ENCODE measurements at regions of chr14 and their contacts with region 1.

Region 1: DNA sequence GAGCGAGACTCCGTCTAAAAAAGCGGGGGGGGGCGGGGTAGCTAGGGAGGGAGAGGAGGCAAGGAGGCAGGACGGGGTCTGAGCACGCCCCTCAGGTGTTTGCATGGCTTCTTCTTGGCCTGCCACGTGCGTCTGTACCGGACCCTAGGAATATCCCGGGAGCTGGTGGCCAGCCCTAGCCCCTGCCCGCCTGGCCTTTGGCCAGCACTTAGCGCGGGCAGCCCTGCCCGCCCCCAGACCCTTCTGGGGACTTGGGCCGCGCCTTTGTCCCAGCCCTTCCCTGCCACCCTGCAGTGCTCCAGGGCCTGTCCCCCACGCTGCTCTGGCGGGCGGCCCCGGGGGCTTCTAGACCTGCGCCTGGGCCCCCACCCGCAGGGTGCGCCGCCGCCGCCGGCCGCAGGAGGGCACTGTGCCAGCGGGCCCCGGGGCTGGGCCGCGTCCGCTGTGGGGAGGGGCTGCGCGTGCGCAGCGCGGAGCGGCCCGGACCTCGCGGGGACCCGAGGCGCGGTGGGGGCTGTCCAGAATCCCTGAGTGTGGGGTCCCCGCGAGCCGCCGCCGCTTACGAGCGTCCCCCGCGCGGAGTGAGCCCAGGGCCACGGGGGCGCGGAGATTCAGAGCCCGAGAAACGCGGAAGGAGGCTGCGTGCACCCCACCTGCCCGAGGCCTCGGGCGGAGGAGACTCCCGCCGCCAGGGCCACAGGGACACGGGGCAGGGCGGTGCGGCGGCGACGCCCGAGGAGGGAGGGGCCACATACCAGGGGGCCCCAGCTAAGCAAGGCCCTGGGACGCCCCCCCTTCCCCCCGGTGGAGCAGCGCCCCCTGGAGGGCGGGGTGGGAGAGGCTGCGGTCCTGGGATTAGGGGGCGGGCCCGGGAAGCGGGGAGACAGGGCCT is 21.0 kb downstream of the SLC25A29 start:
- DNase-seq: peak; percentile 76
- H3K4me3 Mint-ChIP-seq: peak overlapping the region; percentile 72
- H3K27ac Mint-ChIP-seq: peak overlapping the region; percentile 83
- H3K4me1 Mint-ChIP-seq: peaks cover 13% of the 10 kb centered on the region
- H3K27me3 Mint-ChIP-seq: no peaks in the 10 kb centered on the region

Region 2: GRCh38 chr14:100297302-100298300 is 12.3 kb after region 1 on chr14:
- CTCF ChIA-PET with region 1: interaction called, 64 read pairs
- POLR2A ChIA-PET with region 1: no interaction called
- DNase-seq: no peak
- H3K4me3 Mint-ChIP-seq: no peak overlapping the region
- H3K27ac Mint-ChIP-seq: no peak overlapping the region
- H3K4me1 Mint-ChIP-seq: no peaks in the 10 kb centered on the region
- H3K27me3 Mint-ChIP-seq: no peaks in the 10 kb centered on the region

Region 3: DNA sequence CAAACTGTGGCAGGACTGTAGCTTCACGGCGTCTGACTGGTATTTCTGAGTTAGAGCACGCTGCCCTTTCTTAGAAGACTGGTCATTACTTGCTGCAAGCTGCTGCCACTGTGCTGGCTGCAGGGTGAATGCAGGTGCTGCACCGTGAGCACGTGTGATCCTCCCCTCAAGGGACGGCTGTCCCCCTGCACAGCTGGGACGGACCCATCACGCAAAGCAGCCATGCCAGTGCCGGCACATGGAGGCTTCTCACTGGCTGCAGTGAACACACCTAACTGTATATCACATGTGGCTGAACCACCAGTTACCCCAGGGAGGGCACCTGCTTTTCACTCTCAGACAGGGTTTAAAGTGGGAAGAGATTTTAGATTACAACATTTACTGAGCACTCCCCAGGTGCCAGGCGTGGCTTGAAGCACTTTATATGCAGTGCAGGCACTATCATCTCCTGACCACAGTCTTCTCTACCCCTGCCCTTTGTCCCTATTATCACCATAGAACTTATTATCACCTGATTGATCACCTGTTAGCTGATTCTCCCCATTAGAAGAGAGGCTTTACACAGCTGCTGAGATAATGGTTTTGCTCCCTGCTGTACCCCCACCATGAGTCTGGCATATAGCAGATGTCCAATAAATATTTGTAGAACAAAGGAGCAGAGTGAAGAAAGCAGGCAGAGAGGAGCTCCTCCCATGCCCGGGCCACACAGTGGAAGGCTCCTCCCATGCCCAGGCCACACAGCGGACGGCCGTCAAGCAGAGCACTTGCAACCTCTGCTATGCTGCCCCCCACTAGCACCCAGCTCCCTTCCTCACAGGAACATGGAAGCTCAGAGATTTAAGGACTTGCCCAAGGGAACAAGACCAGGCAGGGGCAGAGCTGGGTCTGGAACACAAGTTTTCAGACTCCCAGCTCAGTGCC is 63.8 kb after region 1 on chr14:
- CTCF ChIA-PET with region 1: no interaction called
- POLR2A ChIA-PET with region 1: no interaction called
- DNase-seq: no peak
- H3K4me3 Mint-ChIP-seq: no peak overlapping the region
- H3K27ac Mint-ChIP-seq: no peak overlapping the region
- H3K4me1 Mint-ChIP-seq: peaks cover 2% of the 10 kb centered on the region
- H3K27me3 Mint-ChIP-seq: no peaks in the 10 kb centered on the region